Activated CD8-positive, alpha-beta T cell treated with anti-CD3 and anti-CD28 coated beads, Interleukin-2, amount 10 ng/mL, durations not matched to agents 7 days and 5 days (primary cell): ENCODE measurements at regions of chr2 and their contacts with region 1.

Region 1: DNA sequence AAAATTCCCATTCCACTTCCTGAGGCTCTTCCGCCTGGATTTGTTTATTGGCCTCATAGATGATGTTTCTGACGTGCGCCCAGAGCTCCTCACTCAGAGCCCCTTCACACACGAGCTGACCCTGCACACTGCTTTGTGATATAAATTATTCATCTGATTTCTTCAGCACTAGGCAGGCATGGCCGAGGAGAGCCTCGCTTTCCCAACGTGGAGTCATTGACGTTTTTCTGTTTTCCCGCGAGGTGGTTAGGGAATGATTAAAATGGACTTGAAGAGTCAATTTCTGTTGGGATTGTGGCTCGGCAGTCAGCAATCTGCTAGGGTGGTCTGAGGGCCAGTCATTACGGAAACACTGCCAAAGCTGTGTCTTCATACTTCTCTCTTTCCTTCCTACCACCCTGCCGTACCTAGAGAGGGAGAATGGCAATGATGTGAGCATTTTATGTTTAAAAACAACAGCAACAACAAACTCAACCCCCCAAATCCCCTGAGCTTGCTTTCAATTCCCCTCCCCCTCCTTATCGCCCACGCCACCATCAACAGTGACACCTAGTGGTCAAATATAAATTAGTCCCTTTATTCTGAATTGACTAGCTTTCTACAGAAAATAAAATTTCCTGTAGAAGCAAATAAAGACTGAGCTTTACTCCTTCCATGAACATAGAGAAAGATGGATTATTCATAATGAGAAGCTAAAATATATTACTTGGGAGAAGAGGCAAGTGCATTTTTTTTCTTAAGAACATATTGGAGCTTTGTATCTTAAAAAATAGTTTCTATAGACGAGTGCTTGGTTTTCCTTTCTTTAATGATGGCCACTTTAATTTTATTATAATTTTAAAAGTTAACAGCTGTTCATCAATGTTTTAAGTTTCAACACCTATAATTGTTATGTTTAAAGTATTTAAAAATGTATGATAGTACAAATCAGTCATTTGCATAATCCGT is 285.1 kb downstream of the MTX2 start:
- DNase-seq: peak; percentile 47
- ATAC-seq: peak; percentile 62
- H3K4me3 Mint-ChIP-seq: peak overlapping the region; percentile 63
- H3K27ac Mint-ChIP-seq: no peak overlapping the region
- H3K4me1 Mint-ChIP-seq: peaks cover 12% of the 10 kb centered on the region
- H3K27me3 Mint-ChIP-seq: peaks cover 43% of the 10 kb centered on the region

Region 2: DNA sequence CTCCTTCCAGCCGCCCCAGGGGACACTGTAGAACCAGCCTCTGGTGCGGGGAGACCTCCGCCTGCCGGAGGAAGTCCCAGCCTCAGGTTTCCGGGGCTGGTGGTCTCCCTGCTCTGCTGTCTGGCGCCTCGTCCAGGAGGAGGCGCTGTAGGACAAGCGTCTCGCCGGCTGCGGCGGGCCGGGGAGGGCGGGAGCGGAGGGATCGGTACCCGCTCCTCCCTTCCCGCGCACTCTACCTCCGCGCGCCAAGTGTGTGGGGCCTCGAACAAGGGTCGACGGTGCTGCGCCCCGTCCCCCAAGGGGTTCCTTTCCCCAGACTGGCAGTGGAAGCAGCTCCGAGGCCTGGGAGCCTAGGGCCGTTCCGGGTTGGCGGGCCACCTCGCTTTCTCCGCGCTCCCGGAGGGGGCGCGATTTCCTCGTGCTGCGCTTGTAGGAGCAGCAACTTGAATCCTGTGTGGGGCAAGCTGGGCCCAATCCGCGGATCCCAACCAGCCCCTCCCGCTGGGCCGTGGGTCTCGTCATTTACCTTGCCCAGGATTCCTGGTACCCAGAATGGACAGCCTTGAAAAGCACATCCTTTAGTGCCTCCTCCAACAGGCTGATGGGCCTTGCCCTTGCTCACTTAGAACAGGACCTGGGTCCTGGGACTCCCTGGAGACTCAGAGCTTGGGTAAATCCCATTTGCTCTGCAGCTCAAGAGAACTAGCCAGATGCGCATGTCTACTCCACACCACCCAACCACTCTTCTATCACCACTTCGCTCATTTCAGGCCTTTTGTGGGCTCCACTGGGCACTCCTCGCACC is 413.7 kb before region 1 on chr2:
- CTCF ChIA-PET with region 1: interaction called, 18 read pairs
- POLR2A ChIA-PET with region 1: no interaction called
- DNase-seq: peak; percentile 79
- ATAC-seq: peak; percentile 93
- H3K4me3 Mint-ChIP-seq: peak overlapping the region; percentile 6
- H3K27ac Mint-ChIP-seq: no peak overlapping the region
- H3K4me1 Mint-ChIP-seq: peaks cover 29% of the 10 kb centered on the region
- H3K27me3 Mint-ChIP-seq: peaks cover 69% of the 10 kb centered on the region

Region 3: GRCh38 chr2:176445956-176446355 is 108.4 kb before region 1 on chr2:
- CTCF ChIA-PET with region 1: interaction called, 14 read pairs
- POLR2A ChIA-PET with region 1: no interaction called
- DNase-seq: no peak
- ATAC-seq: no peak
- H3K4me3 Mint-ChIP-seq: no peak overlapping the region
- H3K27ac Mint-ChIP-seq: no peak overlapping the region
- H3K4me1 Mint-ChIP-seq: no peaks in the 10 kb centered on the region
- H3K27me3 Mint-ChIP-seq: peaks cover 2% of the 10 kb centered on the region

Region 4: GRCh38 chr2:176464886-176465564 is 89.3 kb before region 1 on chr2:
- CTCF ChIA-PET with region 1: interaction called, 20 read pairs
- POLR2A ChIA-PET with region 1: no interaction called
- DNase-seq: no peak
- ATAC-seq: no peak
- H3K4me3 Mint-ChIP-seq: no peak overlapping the region
- H3K27ac Mint-ChIP-seq: no peak overlapping the region
- H3K4me1 Mint-ChIP-seq: no peaks in the 10 kb centered on the region
- H3K27me3 Mint-ChIP-seq: peaks cover 35% of the 10 kb centered on the region

Region 5: GRCh38 chr2:176565641-176566323 is 11.4 kb after region 1 on chr2:
- CTCF ChIA-PET with region 1: interaction called, 26 read pairs
- POLR2A ChIA-PET with region 1: no interaction called
- DNase-seq: no peak
- ATAC-seq: no peak
- H3K4me3 Mint-ChIP-seq: no peak overlapping the region
- H3K27ac Mint-ChIP-seq: no peak overlapping the region
- H3K4me1 Mint-ChIP-seq: no peaks in the 10 kb centered on the region
- H3K27me3 Mint-ChIP-seq: peaks cover 30% of the 10 kb centered on the region

Region 6: DNA sequence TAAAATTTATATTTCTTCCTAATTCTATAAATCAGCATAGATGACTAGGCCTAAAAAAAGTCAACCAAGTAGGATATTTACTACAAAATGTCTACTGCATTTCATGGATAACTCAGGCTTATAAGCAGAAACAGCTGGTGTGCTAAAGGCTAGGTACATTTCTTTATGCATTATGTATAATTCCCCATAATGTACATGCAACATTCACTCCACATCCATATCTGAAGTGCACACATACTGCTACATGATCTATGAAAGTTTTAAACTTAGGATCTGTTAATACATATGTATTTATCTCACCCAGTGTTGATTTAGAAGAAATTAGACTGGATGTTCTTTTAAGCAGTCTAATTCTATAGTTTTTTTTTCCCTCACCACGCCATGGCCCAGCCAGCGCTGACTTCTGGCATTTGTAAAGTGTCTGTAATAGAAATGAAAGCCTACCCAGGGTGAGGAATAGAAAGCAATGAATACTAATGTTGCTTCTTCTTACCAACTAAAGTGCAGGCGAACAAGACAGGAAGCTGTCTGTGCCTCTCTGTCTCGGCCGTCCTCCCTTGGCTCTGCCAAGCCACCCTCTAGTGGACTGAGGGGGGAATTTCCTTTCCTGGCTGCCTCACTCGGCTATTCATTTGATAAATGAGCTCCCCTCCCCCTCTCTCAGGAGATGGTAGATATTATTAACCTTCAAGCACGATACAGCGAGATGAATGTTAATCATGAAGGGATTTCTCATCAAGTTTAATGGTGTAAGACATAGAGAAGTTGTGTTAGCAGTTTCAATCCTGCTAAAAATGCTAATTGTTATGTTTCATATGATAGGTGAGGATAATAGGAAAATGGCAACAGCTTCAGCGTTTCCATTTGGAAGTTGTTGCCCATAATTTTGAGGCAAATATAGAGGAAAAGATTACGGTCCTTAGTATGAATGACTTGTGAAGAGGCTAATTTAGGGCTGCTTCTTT is 99.4 kb after region 1 on chr2:
- CTCF ChIA-PET with region 1: interaction called, 19 read pairs
- POLR2A ChIA-PET with region 1: no interaction called
- DNase-seq: peak; percentile 59
- ATAC-seq: peak; percentile 64
- H3K4me3 Mint-ChIP-seq: no peak overlapping the region
- H3K27ac Mint-ChIP-seq: no peak overlapping the region
- H3K4me1 Mint-ChIP-seq: peaks cover 24% of the 10 kb centered on the region
- H3K27me3 Mint-ChIP-seq: peaks cover 39% of the 10 kb centered on the region